BJ (cell line): ENCODE measurements at regions of chr7 and their contacts with region 1.

Region 1: GRCh38 chr7:91940572-91941341 is at the start of gene AKAP9:
- DNase-seq: no peak
- H3K4me3 ChIP-seq: peak within 1 kb of the TSS; percentile 66
- H3K27me3 ChIP-seq: no peaks in the 10 kb centered on the region
- CTCF ChIP-seq: no peak
- polyA plus RNA-seq, gene AKAP9: 7.4 and 13.6 TPM in 2 replicates

Region 2: GRCh38 chr7:92158660-92159575 is 218.2 kb after region 1 on chr7:
- CTCF ChIA-PET with region 1: no interaction called
- POLR2A ChIA-PET with region 1: interaction called, 14 read pairs
- DNase-seq: peak; percentile 79
- H3K4me3 ChIP-seq: no peak overlapping the region
- H3K27me3 ChIP-seq: no peaks in the 10 kb centered on the region
- CTCF ChIP-seq: no peak